ENCODE measurements at regions of chr2 and their contacts with region 1.

Region 1: DNA sequence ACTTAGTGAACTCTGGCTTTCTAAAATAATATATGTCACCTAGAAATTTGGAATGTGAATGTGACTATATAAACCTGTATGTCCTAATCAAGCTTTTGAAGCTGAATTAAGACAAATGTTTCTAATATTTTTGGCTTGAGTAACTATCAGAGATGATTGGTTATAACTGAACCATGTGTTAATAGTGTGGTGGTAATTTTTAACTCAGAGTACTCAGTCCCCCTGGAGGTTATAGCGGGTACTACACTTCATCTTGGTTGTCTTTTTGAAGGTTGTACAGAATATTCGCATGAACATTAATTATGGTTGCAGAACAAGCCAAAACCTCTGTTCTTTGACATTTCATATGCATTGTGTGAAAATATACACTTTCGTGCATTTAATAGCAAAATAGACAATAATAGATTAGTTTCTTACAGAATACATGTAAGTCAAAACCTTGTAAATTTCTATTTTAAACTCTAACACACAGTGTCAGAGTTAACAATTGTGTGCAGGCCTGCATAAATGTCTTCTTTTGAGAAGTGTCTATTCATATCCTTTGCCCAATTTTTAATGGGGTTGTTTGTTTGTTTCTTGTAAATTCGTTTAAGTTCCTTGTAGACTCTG is 86.0 kb downstream of the OSBPL6 start:
- DNase-seq: peak; percentile 74
- H3K4me3 ChIP-seq: no peak overlapping the region
- H3K27ac ChIP-seq: no peak overlapping the region
- H3K4me1 ChIP-seq: peaks cover 33% of the 10 kb centered on the region
- H3K27me3 ChIP-seq: no peaks in the 10 kb centered on the region
- CTCF ChIP-seq: peak; percentile 72

Region 2: DNA sequence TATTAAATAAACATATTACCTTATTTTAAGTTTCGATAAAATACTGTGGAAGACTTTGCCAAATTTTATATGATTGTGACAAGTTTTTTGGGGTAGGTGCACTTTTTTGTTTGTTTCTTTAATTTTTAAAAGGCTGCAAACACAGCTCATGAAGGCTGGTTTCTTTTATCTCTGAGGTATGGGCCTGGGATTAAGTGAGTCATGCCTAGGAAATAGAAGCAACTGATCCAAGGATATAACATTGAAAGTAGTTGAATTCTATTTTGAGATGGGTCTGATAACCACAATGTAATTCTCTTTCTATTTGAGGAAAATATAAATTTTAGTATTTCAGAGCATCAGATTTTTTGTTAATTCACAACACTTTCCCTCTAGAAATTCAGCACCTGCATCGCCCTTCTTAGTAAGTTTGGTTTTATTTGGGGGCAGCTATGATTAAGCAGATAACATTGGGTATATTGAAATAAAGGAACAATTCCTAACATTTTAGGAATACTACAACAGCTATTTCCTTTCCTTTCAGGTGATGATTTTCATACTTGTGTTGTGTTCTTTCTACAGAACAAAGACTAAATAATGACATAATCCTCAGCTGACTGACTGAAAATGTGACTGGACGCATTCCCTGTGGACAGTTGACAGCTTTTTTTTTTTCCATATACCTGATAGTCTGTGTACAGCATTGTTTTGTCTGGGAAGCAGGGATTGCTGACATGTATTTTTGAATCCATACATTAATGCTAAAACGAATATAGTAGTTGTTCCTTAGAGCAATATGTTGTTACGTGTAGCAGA is 151.3 kb before region 1 on chr2:
- CTCF ChIA-PET with region 1: no interaction called
- POLR2A ChIA-PET with region 1: no interaction called
- intact Hi-C with region 1: loop called (anchors 2 kb)
- DNase-seq: no peak
- H3K4me3 ChIP-seq: no peak overlapping the region
- H3K27ac ChIP-seq: no peak overlapping the region
- H3K4me1 ChIP-seq: no peaks in the 10 kb centered on the region
- H3K27me3 ChIP-seq: no peaks in the 10 kb centered on the region
- CTCF ChIP-seq: no peak

Region 3: DNA sequence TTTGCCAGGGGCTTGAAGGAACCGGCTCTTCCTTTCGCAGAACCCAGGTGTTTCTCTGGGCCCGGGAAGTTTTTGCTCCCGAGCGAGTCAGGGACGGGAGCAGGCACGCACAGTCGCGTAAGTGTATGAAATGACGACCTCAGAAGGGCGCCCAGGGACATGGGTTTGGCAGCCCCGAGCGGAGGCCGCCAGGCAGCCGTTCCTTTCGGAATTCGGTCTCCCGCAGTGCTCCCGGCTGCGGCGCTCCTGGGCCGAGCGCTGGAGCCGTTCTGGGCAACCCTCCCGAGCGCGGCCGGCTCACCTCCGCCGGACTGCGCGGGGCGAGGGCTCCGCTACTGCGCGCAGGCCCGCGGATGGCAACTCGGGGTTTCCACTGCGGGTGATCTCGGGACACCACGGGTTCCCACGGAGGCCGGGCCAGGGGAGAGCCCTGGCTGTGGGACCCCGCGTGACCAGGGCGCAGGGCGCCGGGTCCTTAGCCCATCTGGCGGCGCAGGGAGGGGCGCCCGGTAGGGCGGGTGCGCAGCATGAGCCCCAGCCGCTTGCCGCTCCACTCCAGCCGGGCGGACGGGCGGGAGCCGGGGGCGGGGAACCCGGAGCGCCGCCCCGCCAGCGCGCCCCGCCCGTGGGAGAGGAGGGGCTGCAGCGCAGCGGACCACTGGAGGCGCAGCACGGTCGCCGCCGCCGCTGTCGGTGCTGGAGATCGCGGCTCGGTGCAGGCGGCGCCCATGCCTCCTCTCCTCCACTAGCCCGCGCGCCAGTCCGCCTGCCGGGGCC is 86.3 kb before region 1 on chr2 and contains the start of gene OSBPL6:
- CTCF ChIA-PET with region 1: no interaction called
- POLR2A ChIA-PET with region 1: no interaction called
- intact Hi-C with region 1: loop called (anchors 5 kb)
- DNase-seq: peak; percentile 90
- H3K4me3 ChIP-seq: peak within 1 kb of the TSS; percentile 92
- H3K27ac ChIP-seq: peak within 1 kb of the TSS; percentile 72
- H3K4me1 ChIP-seq: peaks cover 32% of the 10 kb centered on the region
- H3K27me3 ChIP-seq: no peaks in the 10 kb centered on the region
- CTCF ChIP-seq: no peak
- total RNA-seq, gene OSBPL6: 19.3 and 20.3 TPM in 2 replicates

Measured in A673 (cell line).